Dendritic cell treated with granulocyte-macrophage colony-stimulating factor and Interleukin-4, amounts not matched to agents 40 ng/mL and 50 ng/mL, for 4 days (primary cell): ENCODE measurements at regions of chr16 and their contacts with region 1.

Region 1: DNA sequence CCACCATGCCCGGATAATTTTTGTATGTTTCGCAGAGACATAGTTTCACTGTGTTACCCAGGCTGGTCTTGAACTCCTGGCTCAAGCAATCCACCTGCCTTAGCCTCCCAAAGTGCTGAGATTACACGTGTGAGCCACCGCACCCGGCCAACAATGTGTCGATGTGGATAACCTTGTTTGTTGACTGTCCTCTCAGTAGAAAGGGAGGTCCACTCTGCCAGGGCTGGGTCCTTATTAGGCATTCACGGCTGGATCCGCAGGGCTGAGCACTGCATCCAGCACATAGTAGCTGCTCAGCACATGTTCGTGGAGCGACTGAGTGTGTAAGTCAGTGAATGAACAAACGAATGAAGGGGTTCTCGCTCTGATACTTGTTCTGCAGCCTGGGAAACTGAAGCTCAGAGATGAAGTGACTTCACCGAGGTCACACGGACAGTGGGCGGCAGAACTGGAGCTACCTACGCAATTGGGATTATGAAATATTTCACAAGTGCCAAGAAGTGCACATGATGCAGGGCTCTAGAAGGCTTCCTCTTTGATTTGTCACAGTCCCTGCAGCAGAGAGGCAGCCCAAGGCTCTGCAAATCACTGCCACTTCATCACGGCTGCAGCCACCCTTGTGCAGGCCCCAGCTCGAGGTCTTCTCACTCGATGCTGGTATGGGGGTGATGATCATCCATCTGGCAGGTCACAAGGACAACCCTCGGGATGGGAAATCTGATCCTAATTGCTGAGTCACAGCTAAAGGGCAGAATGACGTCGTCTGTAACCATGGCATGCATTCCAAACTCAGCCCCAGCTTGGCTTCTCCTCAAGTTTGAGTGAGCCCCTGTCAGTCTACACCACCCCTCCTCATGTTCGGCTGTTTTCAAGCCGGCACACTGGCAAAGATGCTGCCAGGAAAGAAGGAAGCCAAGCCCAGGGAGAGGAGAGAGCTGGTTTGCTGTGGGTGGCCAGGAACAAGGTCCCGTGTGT is 28.0 kb upstream of the SNN start:
- H3K4me3 Mint-ChIP-seq: peak overlapping the region; percentile 62
- H3K27ac Mint-ChIP-seq: peak overlapping the region; percentile 95
- H3K4me1 Mint-ChIP-seq: peaks cover 56% of the 10 kb centered on the region
- H3K27me3 Mint-ChIP-seq: peaks cover 26% of the 10 kb centered on the region

Region 2: DNA sequence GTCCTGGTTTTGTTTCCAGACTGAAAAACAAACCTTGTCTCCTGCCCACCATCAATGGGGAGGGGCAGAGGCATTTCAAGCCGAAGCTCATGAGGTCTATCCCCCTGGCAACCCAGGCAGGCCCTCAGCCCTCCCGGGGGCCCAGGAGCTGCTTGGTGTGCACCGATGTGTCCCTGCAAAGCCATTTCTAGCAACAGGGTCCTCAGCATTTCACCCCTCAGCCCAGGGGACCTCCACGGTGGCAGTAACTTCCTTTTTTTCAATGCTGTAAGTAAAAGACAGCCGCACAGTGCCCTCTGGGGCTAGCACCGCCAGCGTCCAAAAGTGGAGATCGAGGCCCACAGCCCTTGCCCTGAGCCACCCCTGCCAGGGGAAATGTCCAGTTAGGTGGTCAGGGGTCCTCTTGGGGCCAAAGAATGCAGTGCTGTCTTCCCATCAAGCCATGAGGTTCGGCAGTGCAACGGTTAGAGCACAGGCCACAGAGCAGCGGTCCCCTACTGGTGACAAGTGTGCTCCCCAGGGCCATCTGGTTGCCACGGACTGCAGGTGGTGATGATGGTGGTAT is 133.4 kb before region 1 on chr16:
- intact Hi-C with region 1: no loop called
- H3K4me3 Mint-ChIP-seq: peak overlapping the region; percentile 51
- H3K27ac Mint-ChIP-seq: peak overlapping the region; percentile 66
- H3K4me1 Mint-ChIP-seq: peaks cover 17% of the 10 kb centered on the region
- H3K27me3 Mint-ChIP-seq: peaks cover 30% of the 10 kb centered on the region

Region 3: GRCh38 chr16:11585460-11586377 is 54.5 kb before region 1 on chr16:
- intact Hi-C with region 1: loop called (anchors 2 kb)
- H3K4me3 Mint-ChIP-seq: peak overlapping the region; percentile 88
- H3K27ac Mint-ChIP-seq: peak overlapping the region; percentile 89
- H3K4me1 Mint-ChIP-seq: peaks cover 69% of the 10 kb centered on the region
- H3K27me3 Mint-ChIP-seq: peaks cover 26% of the 10 kb centered on the region

Region 4: DNA sequence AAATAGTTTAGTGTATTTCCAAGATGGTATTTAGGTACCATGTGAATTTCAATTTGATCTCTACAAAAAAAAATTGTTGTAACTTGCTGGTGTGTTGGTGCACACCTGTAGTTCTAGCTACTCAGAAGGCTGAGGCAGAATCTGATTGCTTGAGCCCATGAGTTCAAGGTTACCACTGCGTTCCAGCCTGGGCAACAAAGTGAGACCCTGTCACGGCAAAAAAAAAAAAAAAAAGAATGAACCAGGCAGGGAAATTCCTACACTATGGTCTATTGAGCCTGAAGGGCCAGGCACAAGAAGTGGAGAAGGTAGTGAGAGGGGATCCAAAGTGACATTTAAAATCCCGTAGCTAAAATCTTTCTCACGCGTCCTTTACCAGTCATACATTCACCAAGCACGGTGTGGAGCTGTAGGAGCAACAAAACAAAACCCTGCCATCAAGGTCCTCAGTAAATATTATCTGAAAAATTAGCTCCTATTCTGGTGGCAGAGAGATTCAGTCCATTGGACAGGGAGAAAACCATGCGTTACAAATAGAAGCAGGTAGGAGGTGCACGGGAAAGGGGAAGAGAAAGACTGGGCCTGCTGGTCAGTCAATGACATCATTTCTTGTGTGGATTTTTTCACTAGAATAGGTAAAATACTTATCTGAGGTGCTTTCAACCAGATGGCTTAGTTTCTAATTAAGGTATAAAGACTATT is 75.2 kb after region 1 on chr16:
- intact Hi-C with region 1: loop called (anchors 5 kb)
- H3K4me3 Mint-ChIP-seq: no peak overlapping the region
- H3K27ac Mint-ChIP-seq: no peak overlapping the region
- H3K4me1 Mint-ChIP-seq: peaks cover 5% of the 10 kb centered on the region
- H3K27me3 Mint-ChIP-seq: no peaks in the 10 kb centered on the region

Region 5: GRCh38 chr16:11833951-11834695 is 193.9 kb after region 1 on chr16:
- intact Hi-C with region 1: no loop called
- H3K4me3 Mint-ChIP-seq: no peak overlapping the region
- H3K27ac Mint-ChIP-seq: no peak overlapping the region
- H3K4me1 Mint-ChIP-seq: peaks cover 7% of the 10 kb centered on the region
- H3K27me3 Mint-ChIP-seq: no peaks in the 10 kb centered on the region